PC-3 (cell line): ENCODE measurements at regions of chr1 and their contacts with region 1.

Region 1: DNA sequence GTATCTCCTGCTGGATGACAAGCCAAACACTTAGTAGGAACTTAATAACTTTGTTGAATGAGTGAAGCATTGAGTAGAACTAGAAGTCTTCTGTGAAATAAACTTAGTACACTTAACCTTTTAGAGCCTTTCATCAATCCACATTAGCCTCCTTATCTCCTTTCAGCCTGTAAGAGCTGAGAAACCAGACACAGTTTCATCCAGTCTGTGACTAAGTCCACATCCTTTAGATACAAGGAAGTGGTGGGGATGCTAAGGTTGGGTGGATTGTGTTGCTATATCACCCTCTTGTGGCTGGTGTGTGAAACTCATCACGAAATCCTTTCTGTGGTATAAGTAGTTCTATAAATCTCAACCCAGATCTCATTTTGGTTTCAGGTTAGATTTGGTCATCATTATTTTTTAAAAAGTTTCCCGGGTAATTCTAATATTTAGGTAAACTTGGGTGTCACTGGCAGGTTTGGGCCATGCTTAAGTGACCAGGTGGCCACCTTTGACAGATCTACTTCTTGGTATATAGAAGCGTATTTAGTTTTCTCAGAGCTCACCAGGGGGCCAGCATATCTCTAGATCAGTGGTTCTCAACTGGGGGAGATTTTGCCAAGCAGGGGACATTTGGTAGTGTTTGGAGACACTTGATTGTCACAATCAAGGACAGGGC is 27.8 kb upstream of the CD84 start:
- DNase-seq: peak; percentile 88
- ATAC-seq: peak; percentile 97
- H3K4me3 ChIP-seq: no peak overlapping the region
- H3K27ac ChIP-seq: no peak overlapping the region
- H3K4me1 ChIP-seq: no peaks in the 10 kb centered on the region
- H3K27me3 ChIP-seq: peaks cover 45% of the 10 kb centered on the region
- CTCF ChIP-seq: peak; percentile 95

Region 2: DNA sequence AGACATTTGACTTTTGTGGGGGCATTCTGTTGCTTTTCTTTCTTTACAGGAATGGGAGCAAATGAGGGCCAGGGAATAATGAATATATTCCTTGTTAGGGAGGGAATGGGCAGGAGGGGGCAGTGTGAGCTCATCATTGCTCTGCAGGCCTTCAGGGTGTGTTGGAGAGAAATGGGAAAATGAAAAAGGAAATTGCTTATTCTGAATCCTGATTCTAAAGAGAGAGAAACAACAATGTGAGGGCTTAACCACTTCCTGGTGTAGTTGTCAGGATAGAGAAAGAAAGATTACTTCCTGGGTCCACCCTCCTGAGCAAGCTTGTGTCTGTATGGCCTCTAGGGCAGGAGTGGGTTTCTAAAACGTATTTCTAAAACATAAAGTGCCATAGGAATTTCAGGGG is 178.5 kb before region 1 on chr1:
- CTCF ChIA-PET with region 1: no interaction called
- POLR2A ChIA-PET with region 1: no interaction called
- intact Hi-C with region 1: loop called (anchors 1 kb)
- DNase-seq: peak; percentile 70
- ATAC-seq: peak; percentile 85
- H3K4me3 ChIP-seq: no peak overlapping the region
- H3K27ac ChIP-seq: no peak overlapping the region
- H3K4me1 ChIP-seq: peaks cover 4% of the 10 kb centered on the region
- H3K27me3 ChIP-seq: peaks cover 14% of the 10 kb centered on the region
- CTCF ChIP-seq: peak; percentile 87

Region 3: GRCh38 chr1:160494620-160495019 is 112.5 kb before region 1 on chr1:
- CTCF ChIA-PET with region 1: no interaction called
- POLR2A ChIA-PET with region 1: no interaction called
- intact Hi-C with region 1: loop called (anchors 2 kb)
- DNase-seq: peak; percentile 45
- ATAC-seq: peak; percentile 73
- H3K4me3 ChIP-seq: no peak overlapping the region
- H3K27ac ChIP-seq: no peak overlapping the region
- H3K4me1 ChIP-seq: no peaks in the 10 kb centered on the region
- H3K27me3 ChIP-seq: peaks cover 51% of the 10 kb centered on the region
- CTCF ChIP-seq: peak; percentile 63

Region 4: GRCh38 chr1:160539990-160540858 is 66.9 kb before region 1 on chr1:
- CTCF ChIA-PET with region 1: no interaction called
- POLR2A ChIA-PET with region 1: no interaction called
- intact Hi-C with region 1: loop called (anchors 2 kb)
- DNase-seq: no peak
- ATAC-seq: no peak
- H3K4me3 ChIP-seq: no peak overlapping the region
- H3K27ac ChIP-seq: no peak overlapping the region
- H3K4me1 ChIP-seq: no peaks in the 10 kb centered on the region
- H3K27me3 ChIP-seq: peaks cover 40% of the 10 kb centered on the region
- CTCF ChIP-seq: no peak